Activated T-helper 1 cell treated with anti-CD3 and anti-CD28 coated beads, Interleukin-12 subunit alpha, Interleukin-12 subunit beta, Interleukin-2, Interleukin-4 antibody, amounts not matched to agents 30 ng/mL and 10 ng/mL and 1 ng/mL, durations not matched to agents 14 hours and 24 hours and 36 hours (primary cell): ENCODE measurements at regions of chr17 and their contacts with region 1.

Region 1: GRCh38 chr17:82418001-82418986 is at the starts of genes HEXD and OGFOD3:
- DNase-seq: peak; percentile 85
- H3K4me3 Mint-ChIP-seq: peak within 1 kb of the TSS; percentile 82
- H3K27ac Mint-ChIP-seq: peak within 1 kb of the TSS; percentile 61
- H3K4me1 Mint-ChIP-seq: peaks cover 24% of the 10 kb centered on the region
- H3K27me3 Mint-ChIP-seq: no peaks in the 10 kb centered on the region
- total RNA-seq, gene HEXD: 30.5 and 33.0 TPM in 2 replicates
- total RNA-seq, gene OGFOD3: 28.7 and 34.7 TPM in 2 replicates

Region 2: GRCh38 chr17:82037113-82037888 is 381.0 kb before region 1 on chr17 and contains the start of gene DCXR:
- intact Hi-C with region 1: loop called (anchors 1 kb)
- DNase-seq: peak; percentile 98
- H3K4me3 Mint-ChIP-seq: peak within 1 kb of the TSS; percentile 85
- H3K27ac Mint-ChIP-seq: peak within 1 kb of the TSS; percentile 93
- H3K4me1 Mint-ChIP-seq: peaks cover 24% of the 10 kb centered on the region
- H3K27me3 Mint-ChIP-seq: peaks cover 2% of the 10 kb centered on the region
- total RNA-seq, gene DCXR: 123 and 125 TPM in 2 replicates

Region 3: GRCh38 chr17:82273327-82274133 is 144.8 kb before region 1 on chr17 and contains the start of gene CSNK1D:
- intact Hi-C with region 1: loop called (anchors 1 kb)
- DNase-seq: peak; percentile 85
- H3K4me3 Mint-ChIP-seq: peak within 1 kb of the TSS; percentile 94
- H3K27ac Mint-ChIP-seq: peak within 1 kb of the TSS; percentile 99
- H3K4me1 Mint-ChIP-seq: peaks cover 39% of the 10 kb centered on the region
- H3K27me3 Mint-ChIP-seq: peaks cover 2% of the 10 kb centered on the region
- total RNA-seq, gene CSNK1D: 154 and 161 TPM in 2 replicates

Region 4: GRCh38 chr17:82292251-82293154 is 125.8 kb before region 1 on chr17:
- intact Hi-C with region 1: no loop called
- DNase-seq: peak; percentile 92
- H3K4me3 Mint-ChIP-seq: peak overlapping the region; percentile 90
- H3K27ac Mint-ChIP-seq: peak overlapping the region; percentile 93
- H3K4me1 Mint-ChIP-seq: peaks cover 48% of the 10 kb centered on the region
- H3K27me3 Mint-ChIP-seq: peaks cover 2% of the 10 kb centered on the region

Region 5: DNA sequence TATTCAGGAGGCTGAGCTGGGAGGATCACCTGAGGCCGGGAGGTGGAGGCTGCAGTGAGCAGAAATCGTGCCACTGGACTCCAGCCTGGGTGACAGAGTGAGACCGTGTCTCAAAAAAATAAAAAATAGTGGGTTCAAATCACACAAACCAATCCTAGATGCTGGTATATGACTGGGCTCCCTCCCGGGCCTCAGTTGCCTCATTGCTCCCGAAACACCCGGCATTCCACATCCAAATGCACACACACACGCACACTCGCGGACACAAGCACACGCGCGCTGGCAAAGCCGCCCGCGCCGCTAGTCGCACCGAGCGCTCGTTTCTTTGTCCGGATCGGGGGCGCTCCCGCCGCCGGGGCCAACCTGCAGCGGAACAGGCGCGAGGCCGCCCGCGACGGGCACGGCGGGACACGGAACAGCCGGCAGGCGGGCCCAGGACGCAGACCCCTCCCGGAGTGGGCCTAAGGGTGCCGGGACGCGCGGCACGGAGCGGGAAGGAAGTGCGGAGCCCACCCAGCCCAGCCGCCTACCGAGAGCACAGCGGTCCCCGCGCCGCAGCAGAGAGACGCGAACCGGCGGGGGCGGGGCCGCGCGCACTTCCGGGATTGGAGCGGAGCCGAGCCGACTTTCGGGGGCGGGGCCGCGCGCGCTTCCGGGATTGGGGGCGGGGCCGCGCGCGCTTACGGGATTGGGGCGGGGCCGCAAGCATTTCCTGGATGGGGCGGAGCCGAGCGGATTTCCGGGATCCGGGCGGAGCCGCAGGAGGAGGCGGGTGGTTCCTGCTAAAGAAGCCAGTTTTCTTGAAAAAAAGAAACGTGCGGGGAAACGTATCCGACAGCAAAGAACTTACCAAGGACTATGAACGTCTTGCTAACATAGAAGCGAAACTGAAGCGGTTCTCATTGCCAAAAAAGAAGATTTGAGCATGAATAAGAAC is 32.1 kb after region 1 on chr17 and contains the start of gene CYBC1:
- intact Hi-C with region 1: loop called (anchors 1 kb)
- DNase-seq: peak; percentile 93
- H3K4me3 Mint-ChIP-seq: peak within 1 kb of the TSS; percentile 91
- H3K27ac Mint-ChIP-seq: peak within 1 kb of the TSS; percentile 96
- H3K4me1 Mint-ChIP-seq: peaks cover 31% of the 10 kb centered on the region
- H3K27me3 Mint-ChIP-seq: no peaks in the 10 kb centered on the region
- total RNA-seq, gene CYBC1: 253 and 257 TPM in 2 replicates

Region 6: GRCh38 chr17:82494236-82495055 is 76.2 kb after region 1 on chr17:
- intact Hi-C with region 1: loop called (anchors 1 kb)
- DNase-seq: peak; percentile 81
- H3K4me3 Mint-ChIP-seq: peak overlapping the region; percentile 12
- H3K27ac Mint-ChIP-seq: peak overlapping the region; percentile 87
- H3K4me1 Mint-ChIP-seq: peaks cover 29% of the 10 kb centered on the region
- H3K27me3 Mint-ChIP-seq: peaks cover 2% of the 10 kb centered on the region

Region 7: GRCh38 chr17:82648166-82648668 is 229.9 kb after region 1 on chr17 and contains the start of gene WDR45B:
- intact Hi-C with region 1: loop called (anchors 1 kb)
- DNase-seq: peak; percentile 90
- H3K4me3 Mint-ChIP-seq: peak within 1 kb of the TSS; percentile 89
- H3K27ac Mint-ChIP-seq: peak within 1 kb of the TSS; percentile 76
- H3K4me1 Mint-ChIP-seq: peaks cover 25% of the 10 kb centered on the region
- H3K27me3 Mint-ChIP-seq: no peaks in the 10 kb centered on the region
- total RNA-seq, gene WDR45B: 55.1 and 56.7 TPM in 2 replicates

Region 8: GRCh38 chr17:82767041-82767754 is 348.9 kb after region 1 on chr17:
- intact Hi-C with region 1: no loop called
- DNase-seq: no peak
- H3K4me3 Mint-ChIP-seq: no peak overlapping the region
- H3K27ac Mint-ChIP-seq: no peak overlapping the region
- H3K4me1 Mint-ChIP-seq: peaks cover 16% of the 10 kb centered on the region
- H3K27me3 Mint-ChIP-seq: no peaks in the 10 kb centered on the region